Activated CD4-positive, alpha-beta memory T cell treated with anti-CD3 and anti-CD28 coated beads for 36 hours (primary cell): ENCODE measurements at regions of chrX and their contacts with region 1.

Region 1: GRCh38 chrX:15737960-15738902 is at the start of gene CA5B:
- DNase-seq: peak; percentile 97
- H3K4me3 Mint-ChIP-seq: peak within 1 kb of the TSS; percentile 87
- H3K27ac Mint-ChIP-seq: peak within 1 kb of the TSS; percentile 80
- H3K4me1 Mint-ChIP-seq: peaks cover 38% of the 10 kb centered on the region
- H3K27me3 Mint-ChIP-seq: no peaks in the 10 kb centered on the region
- total RNA-seq, gene CA5B: 13.1 to 15.5 TPM

Region 2: DNA sequence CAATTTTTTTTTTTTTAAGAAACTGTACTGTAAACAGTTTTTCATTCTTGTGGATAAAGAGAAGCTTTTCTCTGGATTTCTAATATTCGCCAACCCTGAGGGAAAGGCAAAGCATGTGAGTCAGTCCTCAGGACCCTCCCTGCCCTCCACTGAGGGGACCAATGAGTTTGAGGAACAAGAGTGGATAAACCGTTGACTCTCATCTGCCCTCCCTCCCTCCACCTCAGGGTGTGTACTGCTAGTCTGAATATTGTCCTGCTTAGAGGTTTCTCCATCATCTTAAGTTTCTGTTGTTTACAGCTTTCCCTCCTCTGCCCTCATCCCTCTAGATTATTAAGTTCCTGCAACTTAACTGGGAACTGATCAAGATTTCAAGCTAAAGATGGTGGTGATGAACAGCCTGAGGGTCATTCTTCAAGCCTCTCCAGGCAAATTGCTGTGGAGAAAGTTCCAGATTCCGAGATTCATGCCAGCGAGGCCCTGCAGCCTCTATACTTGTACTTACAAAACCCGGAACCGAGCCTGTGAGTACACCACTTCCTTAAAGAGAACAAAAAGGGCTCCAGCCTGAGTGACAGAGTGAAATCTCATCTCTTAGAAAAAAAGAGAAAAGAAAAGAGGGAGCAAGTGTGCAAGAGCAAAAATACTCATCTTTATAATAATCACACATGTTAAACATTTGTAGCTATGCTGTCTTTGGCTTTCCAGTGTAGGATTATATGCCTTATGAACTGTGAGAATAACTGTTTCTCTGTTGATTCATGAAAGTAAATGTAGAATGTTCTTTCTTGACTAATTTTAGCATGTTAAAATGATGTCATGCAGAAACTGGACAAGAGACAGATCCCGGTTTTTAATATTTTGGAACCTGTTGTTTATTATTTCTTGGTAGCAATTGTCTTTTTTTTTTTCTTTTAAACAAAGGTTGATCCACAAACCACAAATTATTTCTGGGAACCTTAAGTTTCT is 11.7 kb after region 1 on chrX:
- CTCF ChIA-PET with region 1: interaction called, 6 read pairs
- POLR2A ChIA-PET with region 1: interaction called, 10 read pairs
- intact Hi-C with region 1: loop called (anchors 1 kb)
- DNase-seq: peak; percentile 35
- H3K4me3 Mint-ChIP-seq: peak overlapping the region; percentile 53
- H3K27ac Mint-ChIP-seq: peak overlapping the region; percentile 94
- H3K4me1 Mint-ChIP-seq: peaks cover 67% of the 10 kb centered on the region
- H3K27me3 Mint-ChIP-seq: no peaks in the 10 kb centered on the region